IMR-90 (cell line): ENCODE measurements at regions of chr16 and their contacts with region 1.

Region 1: DNA sequence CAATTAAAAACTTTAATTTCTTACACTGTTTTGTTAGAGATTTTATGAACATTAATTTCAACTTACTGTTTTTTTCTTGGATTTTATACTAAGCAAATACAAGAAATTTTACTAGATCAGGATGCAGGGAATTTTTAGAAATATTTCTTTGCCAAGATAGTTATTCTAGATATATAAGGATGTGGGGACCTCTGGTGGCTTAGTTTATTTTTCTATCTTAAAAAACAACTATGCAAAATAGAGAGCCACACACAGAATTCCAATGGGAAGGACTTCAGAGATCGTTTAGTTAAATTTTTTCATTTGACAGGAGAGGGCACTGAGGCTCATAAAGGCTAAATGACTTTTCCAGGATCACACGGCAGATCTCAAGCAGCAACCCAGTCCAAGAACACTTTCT is 23.0 kb upstream of the CAPNS2 start:
- DNase-seq: peak; percentile 41
- ATAC-seq: peak; percentile 67
- H3K4me3 ChIP-seq: no peak overlapping the region
- H3K27ac ChIP-seq: no peak overlapping the region
- H3K4me1 ChIP-seq: peaks cover 6% of the 10 kb centered on the region
- H3K27me3 ChIP-seq: no peaks in the 10 kb centered on the region
- CTCF ChIP-seq: peak; percentile 59
- POLR2A ChIP-seq: no peak
- RAD21 ChIP-seq: peak; percentile 64

Region 2: GRCh38 chr16:55393991-55394390 is 149.5 kb before region 1 on chr16:
- CTCF ChIA-PET with region 1: no interaction called
- POLR2A ChIA-PET with region 1: no interaction called
- dilution Hi-C with region 1: no loop called
- in situ Hi-C with region 1: no loop called
- intact Hi-C with region 1: no loop called
- DNase-seq: no peak
- ATAC-seq: no peak
- H3K4me3 ChIP-seq: no peak overlapping the region
- H3K27ac ChIP-seq: no peak overlapping the region
- H3K4me1 ChIP-seq: no peaks in the 10 kb centered on the region
- H3K27me3 ChIP-seq: no peaks in the 10 kb centered on the region
- CTCF ChIP-seq: no peak
- POLR2A ChIP-seq: no peak
- RAD21 ChIP-seq: no peak

Region 3: GRCh38 chr16:55494994-55495421 is 48.5 kb before region 1 on chr16:
- CTCF ChIA-PET with region 1: interaction called, 3 read pairs
- POLR2A ChIA-PET with region 1: no interaction called
- dilution Hi-C with region 1: no loop called
- in situ Hi-C with region 1: no loop called
- intact Hi-C with region 1: loop called (anchors 1 kb)
- DNase-seq: peak; percentile 96
- ATAC-seq: peak; percentile 74
- H3K4me3 ChIP-seq: no peak overlapping the region
- H3K27ac ChIP-seq: no peak overlapping the region
- H3K4me1 ChIP-seq: peaks cover 13% of the 10 kb centered on the region
- H3K27me3 ChIP-seq: no peaks in the 10 kb centered on the region
- CTCF ChIP-seq: peak; percentile 63
- POLR2A ChIP-seq: no peak
- RAD21 ChIP-seq: peak; percentile 85

Region 4: DNA sequence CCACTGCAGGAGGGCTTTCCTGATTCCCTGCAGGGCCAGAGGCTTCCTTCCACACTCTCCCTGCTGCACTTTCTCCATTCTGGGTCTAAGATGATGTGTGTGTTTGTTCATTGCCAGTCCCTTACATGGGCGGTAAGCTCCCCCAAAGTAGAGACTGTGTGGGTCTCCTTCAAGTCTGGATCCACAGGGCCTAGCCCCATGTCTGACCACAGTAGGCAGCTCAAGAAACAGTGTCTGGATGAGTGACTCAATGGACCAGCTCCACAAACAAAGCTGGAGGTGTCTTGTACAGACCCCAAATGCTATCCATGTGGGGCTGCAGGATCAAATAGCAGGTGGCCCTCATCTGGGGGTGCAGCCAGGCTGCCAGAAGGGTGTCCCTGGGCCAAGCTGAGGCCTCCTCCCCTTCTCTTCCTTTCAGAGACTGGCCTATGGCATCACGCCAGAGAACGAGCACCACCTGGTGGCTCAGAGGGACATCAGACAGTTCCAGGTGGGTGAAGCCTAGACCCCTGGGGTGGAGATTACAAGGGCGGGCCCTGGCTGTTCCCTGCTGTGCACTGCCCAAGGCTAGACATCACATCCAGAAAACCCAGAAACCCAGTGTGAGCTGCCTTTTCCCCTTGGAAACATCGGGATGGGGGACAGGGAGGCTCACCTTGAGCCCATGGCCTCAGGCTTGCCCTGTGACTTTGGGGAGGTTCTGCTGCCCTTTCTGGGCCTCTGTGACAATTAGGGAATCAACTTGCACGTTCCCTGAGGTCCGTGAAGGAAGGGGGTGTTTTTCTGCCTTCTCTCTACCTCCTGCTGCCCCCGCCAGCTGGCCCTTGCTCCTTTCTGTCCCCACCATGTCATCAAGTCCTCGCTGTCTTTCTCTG is 158.2 kb after region 1 on chr16:
- CTCF ChIA-PET with region 1: interaction called, 4 read pairs
- POLR2A ChIA-PET with region 1: no interaction called
- dilution Hi-C with region 1: no loop called
- in situ Hi-C with region 1: loop called (anchors 5 kb)
- intact Hi-C with region 1: loop called (anchors 1 kb)
- DNase-seq: peak; percentile 26
- ATAC-seq: peak; percentile 72
- H3K4me3 ChIP-seq: no peak overlapping the region
- H3K27ac ChIP-seq: no peak overlapping the region
- H3K4me1 ChIP-seq: no peaks in the 10 kb centered on the region
- H3K27me3 ChIP-seq: peaks cover 30% of the 10 kb centered on the region
- CTCF ChIP-seq: peak; percentile 48
- POLR2A ChIP-seq: no peak
- RAD21 ChIP-seq: peak; percentile 44

Region 5: DNA sequence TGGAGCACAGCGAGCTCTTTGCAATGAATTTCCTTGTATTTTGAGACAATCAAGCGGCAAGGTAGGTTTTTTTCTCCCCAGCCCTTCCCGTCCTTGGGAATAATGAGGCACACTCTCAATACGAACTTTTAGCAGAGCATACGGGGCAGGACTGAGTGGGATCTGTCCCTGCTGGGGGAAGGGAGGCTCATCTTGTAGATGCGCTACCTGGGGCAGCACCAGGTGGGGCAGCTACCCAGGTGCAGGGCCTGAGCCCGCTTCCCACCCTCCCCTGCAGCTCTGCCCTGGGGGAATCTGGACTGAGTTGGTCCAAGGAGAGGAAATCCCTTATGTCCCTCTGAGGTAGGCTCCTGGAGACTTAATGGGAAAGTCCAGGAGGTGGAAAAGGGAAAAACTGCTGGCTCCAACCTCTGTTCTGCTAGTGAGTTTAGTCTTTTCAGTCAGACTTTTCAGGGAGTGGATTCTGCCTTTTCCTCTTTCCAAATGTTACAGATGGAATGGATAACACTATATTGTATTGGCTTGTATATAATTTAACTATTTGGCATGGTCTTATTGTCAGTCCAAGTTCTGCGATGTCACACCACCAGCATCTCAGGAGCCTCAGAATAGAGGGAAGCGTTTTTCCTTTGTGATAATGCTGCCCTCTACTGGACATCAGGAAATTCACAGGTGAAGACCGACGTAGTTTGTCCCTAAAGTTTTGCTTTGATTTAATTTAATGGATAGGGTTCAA is 299.1 kb after region 1 on chr16:
- CTCF ChIA-PET with region 1: no interaction called
- POLR2A ChIA-PET with region 1: no interaction called
- dilution Hi-C with region 1: no loop called
- in situ Hi-C with region 1: loop called (anchors 10 kb)
- intact Hi-C with region 1: loop called (anchors 5 kb)
- DNase-seq: peak; percentile 45
- ATAC-seq: peak; percentile 80; the same call in 1 of the 2 replicates
- H3K4me3 ChIP-seq: no peak overlapping the region
- H3K27ac ChIP-seq: no peak overlapping the region
- H3K4me1 ChIP-seq: no peaks in the 10 kb centered on the region
- H3K27me3 ChIP-seq: no peaks in the 10 kb centered on the region
- CTCF ChIP-seq: peak; percentile 71
- POLR2A ChIP-seq: no peak
- RAD21 ChIP-seq: peak; percentile 73